CD8-positive, alpha-beta memory T cell (primary cell): ENCODE measurements at regions of chr14 and their contacts with region 1.

Region 1: GRCh38 chr14:50860478-50861086 is 11.3 kb upstream of the ABHD12B start:
- DNase-seq: peak; percentile 79 to 91 (median 84)
- H3K4me3 ChIP-seq: peak overlapping the region; percentile 85
- H3K4me3 Mint-ChIP-seq: peak overlapping the region; percentile 90 to 99 (median 94)
- H3K27ac ChIP-seq: peak overlapping the region; percentile 43
- H3K27ac Mint-ChIP-seq: peak overlapping the region in 7 of 8 donors; percentile 88 to 96 (median 91)
- H3K4me1 ChIP-seq: peaks cover 7% of the 10 kb centered on the region
- H3K4me1 Mint-ChIP-seq: peaks cover 10 to 13% (median 10%) of the 10 kb centered on the region in 3 donors
- H3K27me3 ChIP-seq: no peaks in the 10 kb centered on the region
- H3K27me3 Mint-ChIP-seq: peaks cover 0 to 3% of the 10 kb centered on the region in 2 donors

Region 2: GRCh38 chr14:50156111-50156510 is 704.5 kb before region 1 on chr14:
- CTCF ChIA-PET with region 1: no interaction called
- POLR2A ChIA-PET with region 1: no interaction called
- DNase-seq: no peak
- H3K4me3 ChIP-seq: no peak overlapping the region
- H3K4me3 Mint-ChIP-seq: no peak overlapping the region
- H3K27ac ChIP-seq: no peak overlapping the region
- H3K27ac Mint-ChIP-seq: no peak overlapping the region
- H3K4me1 ChIP-seq: no peaks in the 10 kb centered on the region
- H3K4me1 Mint-ChIP-seq: no peaks in the 10 kb centered on the region
- H3K27me3 ChIP-seq: no peaks in the 10 kb centered on the region
- H3K27me3 Mint-ChIP-seq: no peaks in the 10 kb centered on the region

Region 3: DNA sequence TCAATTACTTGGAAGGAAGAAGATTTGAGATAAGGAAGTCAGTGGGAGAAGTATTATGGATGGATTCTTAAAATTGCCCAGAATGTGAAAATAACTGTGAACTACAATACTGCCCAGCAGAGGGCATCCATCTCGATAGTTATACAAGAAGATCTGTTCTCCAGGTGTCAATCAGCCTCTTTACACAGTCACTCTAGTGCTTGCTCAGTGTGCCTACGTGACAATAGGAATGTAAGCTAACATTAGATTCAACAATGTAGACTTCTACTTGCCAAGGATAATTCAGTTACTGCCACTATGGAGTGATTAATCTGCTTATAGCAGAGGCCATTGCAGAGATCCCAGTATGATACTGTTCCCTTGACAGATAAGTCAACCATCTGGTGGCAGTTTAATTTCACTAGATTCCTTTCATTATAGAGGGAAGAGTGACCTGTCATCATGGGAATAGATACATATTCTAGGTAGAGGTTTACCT is 317.6 kb before region 1 on chr14:
- CTCF ChIA-PET with region 1: interaction called, 30 read pairs
- POLR2A ChIA-PET with region 1: no interaction called
- DNase-seq: peak in 2 of 5 donors; percentile 26 to 28
- H3K4me3 ChIP-seq: no peak overlapping the region
- H3K4me3 Mint-ChIP-seq: no peak overlapping the region
- H3K27ac ChIP-seq: no peak overlapping the region
- H3K27ac Mint-ChIP-seq: peak overlapping the region in 1 of 8 donors; percentile 41
- H3K4me1 ChIP-seq: peaks cover 8% of the 10 kb centered on the region
- H3K4me1 Mint-ChIP-seq: peaks cover 7 to 16% (median 15%) of the 10 kb centered on the region in 3 donors
- H3K27me3 ChIP-seq: no peaks in the 10 kb centered on the region
- H3K27me3 Mint-ChIP-seq: peaks cover 0 to 11% of the 10 kb centered on the region in 2 donors

Region 4: GRCh38 chr14:50773632-50774541 is 86.7 kb before region 1 on chr14:
- CTCF ChIA-PET with region 1: interaction called, 91 read pairs
- POLR2A ChIA-PET with region 1: interaction called, 14 read pairs
- DNase-seq: no peak
- H3K4me3 ChIP-seq: no peak overlapping the region
- H3K4me3 Mint-ChIP-seq: no peak overlapping the region
- H3K27ac ChIP-seq: no peak overlapping the region
- H3K27ac Mint-ChIP-seq: peak overlapping the region in 7 of 8 donors; percentile 33 to 82 (median 70)
- H3K4me1 ChIP-seq: peaks cover 21% of the 10 kb centered on the region
- H3K4me1 Mint-ChIP-seq: peaks cover 17 to 38% (median 27%) of the 10 kb centered on the region in 3 donors
- H3K27me3 ChIP-seq: no peaks in the 10 kb centered on the region
- H3K27me3 Mint-ChIP-seq: no peaks in the 10 kb centered on the region

Region 5: DNA sequence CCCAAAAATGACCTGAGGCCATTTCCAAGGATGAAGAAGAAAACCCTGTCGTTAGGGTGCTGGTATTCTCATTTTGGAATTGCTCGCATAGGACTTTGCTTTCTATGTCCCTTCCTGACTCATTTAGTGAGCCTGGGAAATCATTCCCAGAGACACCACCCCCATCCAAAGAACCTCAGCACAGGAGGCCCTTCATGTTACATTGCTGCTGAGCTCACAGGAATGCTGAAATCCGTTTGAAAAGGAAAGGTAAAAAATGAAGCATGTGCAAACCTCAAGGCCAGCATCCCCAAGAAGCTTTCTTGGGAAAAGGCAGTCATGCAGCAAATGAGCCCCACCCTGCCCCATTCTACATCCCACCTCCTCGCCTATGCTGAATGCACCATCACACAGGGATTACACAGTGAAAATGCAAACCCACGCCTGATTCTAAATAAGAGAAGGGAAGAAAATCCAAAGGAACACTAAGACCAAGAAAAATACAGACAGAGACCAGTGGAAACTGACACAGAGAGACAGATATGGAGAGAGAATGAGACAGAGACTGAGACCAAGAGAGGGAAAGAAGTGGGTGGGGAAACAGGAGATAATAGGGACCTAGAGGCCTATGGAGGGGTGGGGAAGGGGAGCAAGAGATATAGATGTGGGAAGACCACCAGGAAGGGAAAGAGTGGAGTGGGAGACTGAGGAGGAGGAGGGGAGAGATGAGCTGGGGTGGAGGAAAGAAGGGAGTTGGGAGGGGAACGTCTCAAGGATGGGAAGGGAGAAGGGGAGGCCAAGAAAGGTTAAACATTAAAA is 63.1 kb before region 1 on chr14:
- CTCF ChIA-PET with region 1: interaction called, 122 read pairs
- POLR2A ChIA-PET with region 1: interaction called, 8 read pairs
- DNase-seq: no peak
- H3K4me3 ChIP-seq: no peak overlapping the region
- H3K4me3 Mint-ChIP-seq: no peak overlapping the region
- H3K27ac ChIP-seq: no peak overlapping the region
- H3K27ac Mint-ChIP-seq: peak overlapping the region in 7 of 8 donors; percentile 1 to 90 (median 59)
- H3K4me1 ChIP-seq: peaks cover 27% of the 10 kb centered on the region
- H3K4me1 Mint-ChIP-seq: peaks cover 50 to 81% (median 60%) of the 10 kb centered on the region in 3 donors
- H3K27me3 ChIP-seq: no peaks in the 10 kb centered on the region
- H3K27me3 Mint-ChIP-seq: peaks cover 0 to 2% of the 10 kb centered on the region in 2 donors

Region 6: GRCh38 chr14:50830932-50831725 is 29.5 kb before region 1 on chr14 and contains the start of gene NIN:
- CTCF ChIA-PET with region 1: interaction called, 49 read pairs
- POLR2A ChIA-PET with region 1: interaction called, 38 read pairs
- DNase-seq: peak; percentile 65 to 82 (median 72)
- H3K4me3 ChIP-seq: peak within 1 kb of the TSS; percentile 69
- H3K4me3 Mint-ChIP-seq: peak within 1 kb of the TSS; percentile 94 to 99 (median 97)
- H3K27ac ChIP-seq: peak within 1 kb of the TSS; percentile 76
- H3K27ac Mint-ChIP-seq: peak within 1 kb of the TSS; percentile 92 to 99 (median 97)
- H3K4me1 ChIP-seq: peaks cover 58% of the 10 kb centered on the region
- H3K4me1 Mint-ChIP-seq: peaks cover 49 to 70% (median 65%) of the 10 kb centered on the region in 3 donors
- H3K27me3 ChIP-seq: no peaks in the 10 kb centered on the region
- H3K27me3 Mint-ChIP-seq: no peaks in the 10 kb centered on the region
- total RNA-seq, gene NIN: 73.8 to 77.8 TPM

Region 7: DNA sequence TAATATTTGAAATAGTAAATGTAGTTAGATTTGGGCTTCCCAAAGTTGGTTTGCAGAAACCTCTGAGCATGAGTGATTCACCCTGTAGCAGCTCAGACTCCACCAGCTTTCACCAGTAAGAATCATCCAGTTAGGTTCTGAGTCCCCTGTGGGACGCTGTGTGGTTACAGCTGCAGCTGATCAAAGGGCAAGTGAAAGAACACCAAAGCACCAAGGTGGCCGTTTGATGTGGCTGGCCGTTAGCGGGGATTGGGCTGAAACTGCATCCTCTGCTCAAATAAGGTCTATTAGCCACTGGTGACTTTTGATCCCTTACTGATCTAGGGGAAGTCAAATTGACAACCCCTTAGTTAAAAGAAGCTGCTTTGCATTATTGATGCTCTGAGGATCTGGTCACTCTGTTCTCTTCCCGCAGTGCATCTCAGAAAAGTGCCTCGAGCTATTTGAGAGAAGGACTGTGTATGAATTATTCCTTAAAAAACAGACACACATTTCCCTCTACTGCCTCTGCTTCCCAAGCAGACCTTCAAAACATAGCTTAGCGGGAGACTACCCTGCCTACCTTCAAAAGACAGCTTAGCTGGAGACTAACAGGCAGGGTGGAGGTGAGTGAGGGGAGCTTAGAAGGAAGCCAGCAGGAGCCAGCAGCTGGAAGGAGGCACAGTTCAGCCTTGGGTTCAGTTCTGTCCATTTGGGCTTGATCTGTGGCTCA is 14.9 kb after region 1 on chr14:
- CTCF ChIA-PET with region 1: interaction called, 11 read pairs
- POLR2A ChIA-PET with region 1: interaction called, 4 read pairs
- DNase-seq: peak; percentile 14 to 72 (median 50)
- H3K4me3 ChIP-seq: no peak overlapping the region
- H3K4me3 Mint-ChIP-seq: peak overlapping the region in 6 of 7 donors; percentile 5 to 61 (median 34)
- H3K27ac ChIP-seq: no peak overlapping the region
- H3K27ac Mint-ChIP-seq: no peak overlapping the region
- H3K4me1 ChIP-seq: peaks cover 15% of the 10 kb centered on the region
- H3K4me1 Mint-ChIP-seq: peaks cover 24 to 38% (median 26%) of the 10 kb centered on the region in 3 donors
- H3K27me3 ChIP-seq: peaks cover 24% of the 10 kb centered on the region
- H3K27me3 Mint-ChIP-seq: peaks cover 37 to 38% of the 10 kb centered on the region in 2 donors